Caco-2 (cell line): ENCODE measurements at regions of chr17 and their contacts with region 1.

Region 1: DNA sequence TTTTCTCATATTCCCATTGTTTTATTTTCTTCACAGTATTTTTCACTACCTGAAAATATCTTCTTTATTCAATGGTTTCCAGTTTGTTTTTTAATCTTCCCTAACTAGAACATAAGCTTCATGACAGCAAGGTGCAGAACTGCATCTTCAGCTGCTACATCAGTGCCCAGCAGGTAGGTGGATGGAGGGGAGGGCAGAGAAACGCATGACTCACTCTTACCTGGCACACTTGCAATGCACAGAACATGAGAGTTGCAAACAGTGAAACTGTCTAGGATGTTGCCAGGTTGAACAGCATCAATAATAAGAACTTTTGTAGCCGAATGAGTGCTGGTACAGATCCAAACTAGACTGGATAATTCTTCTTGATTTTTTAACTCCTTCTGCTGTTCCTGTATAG is 127.1 kb downstream of the SPAG9 start:
- DNase-seq: no peak
- H3K4me3 ChIP-seq: no peak overlapping the region
- H3K4me3 Mint-ChIP-seq: no peak overlapping the region
- H3K27ac Mint-ChIP-seq: no peak overlapping the region
- H3K4me1 ChIP-seq: no peaks in the 10 kb centered on the region
- H3K4me1 Mint-ChIP-seq: peaks cover 6% of the 10 kb centered on the region
- H3K27me3 ChIP-seq: no peaks in the 10 kb centered on the region
- H3K27me3 Mint-ChIP-seq: no peaks in the 10 kb centered on the region
- CTCF ChIP-seq: no peak

Region 2: GRCh38 chr17:50926523-50926922 is 67.0 kb before region 1 on chr17:
- CTCF ChIA-PET with region 1: no interaction called
- POLR2A ChIA-PET with region 1: no interaction called
- intact Hi-C with region 1: no loop called
- DNase-seq: no peak
- H3K4me3 ChIP-seq: no peak overlapping the region
- H3K4me3 Mint-ChIP-seq: no peak overlapping the region
- H3K27ac Mint-ChIP-seq: no peak overlapping the region
- H3K4me1 ChIP-seq: peaks cover 21% of the 10 kb centered on the region
- H3K4me1 Mint-ChIP-seq: peaks cover 14% of the 10 kb centered on the region
- H3K27me3 ChIP-seq: no peaks in the 10 kb centered on the region
- H3K27me3 Mint-ChIP-seq: no peaks in the 10 kb centered on the region
- CTCF ChIP-seq: no peak

Region 3: GRCh38 chr17:50976951-50977472 is 16.5 kb before region 1 on chr17:
- CTCF ChIA-PET with region 1: no interaction called
- POLR2A ChIA-PET with region 1: no interaction called
- intact Hi-C with region 1: loop called (anchors 2 kb)
- DNase-seq: no peak
- H3K4me3 ChIP-seq: no peak overlapping the region
- H3K4me3 Mint-ChIP-seq: no peak overlapping the region
- H3K27ac Mint-ChIP-seq: no peak overlapping the region
- H3K4me1 ChIP-seq: peaks cover 17% of the 10 kb centered on the region
- H3K4me1 Mint-ChIP-seq: peaks cover 24% of the 10 kb centered on the region
- H3K27me3 ChIP-seq: no peaks in the 10 kb centered on the region
- H3K27me3 Mint-ChIP-seq: no peaks in the 10 kb centered on the region
- CTCF ChIP-seq: no peak

Region 4: DNA sequence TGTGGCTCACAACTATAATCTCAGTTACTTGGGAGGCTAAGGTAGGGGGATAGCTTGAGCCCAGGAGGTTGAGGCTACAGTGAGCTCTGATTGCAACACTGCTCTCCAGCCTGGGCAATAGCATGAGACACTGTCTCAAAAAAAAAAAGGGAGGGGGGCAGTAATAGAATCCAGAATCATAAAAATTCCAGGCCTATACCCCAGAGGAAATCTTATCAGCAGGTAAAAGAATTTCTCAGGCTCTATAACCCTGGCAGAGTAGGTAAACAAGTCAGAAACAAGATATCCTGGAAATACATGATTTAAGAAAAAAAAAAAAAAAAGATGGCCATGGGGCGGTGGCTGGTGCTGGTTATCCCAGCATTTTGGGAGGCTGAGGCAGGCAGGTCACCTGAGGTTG is 114.2 kb after region 1 on chr17:
- CTCF ChIA-PET with region 1: no interaction called
- POLR2A ChIA-PET with region 1: no interaction called
- intact Hi-C with region 1: no loop called
- DNase-seq: peak; percentile 78 to 82
- H3K4me3 ChIP-seq: no peak overlapping the region
- H3K4me3 Mint-ChIP-seq: peak overlapping the region; percentile 22
- H3K27ac Mint-ChIP-seq: peak overlapping the region; percentile 72
- H3K4me1 ChIP-seq: peaks cover 63% of the 10 kb centered on the region
- H3K4me1 Mint-ChIP-seq: peaks cover 27% of the 10 kb centered on the region
- H3K27me3 ChIP-seq: no peaks in the 10 kb centered on the region
- H3K27me3 Mint-ChIP-seq: no peaks in the 10 kb centered on the region
- CTCF ChIP-seq: no peak